Activated CD4-positive, alpha-beta T cell treated with anti-CD3 and anti-CD28 coated beads, Interleukin-2, amount 10 ng/mL, durations not matched to agents 7 days and 5 days (primary cell): ENCODE measurements at regions of chr9 and their contacts with region 1.

Region 1: DNA sequence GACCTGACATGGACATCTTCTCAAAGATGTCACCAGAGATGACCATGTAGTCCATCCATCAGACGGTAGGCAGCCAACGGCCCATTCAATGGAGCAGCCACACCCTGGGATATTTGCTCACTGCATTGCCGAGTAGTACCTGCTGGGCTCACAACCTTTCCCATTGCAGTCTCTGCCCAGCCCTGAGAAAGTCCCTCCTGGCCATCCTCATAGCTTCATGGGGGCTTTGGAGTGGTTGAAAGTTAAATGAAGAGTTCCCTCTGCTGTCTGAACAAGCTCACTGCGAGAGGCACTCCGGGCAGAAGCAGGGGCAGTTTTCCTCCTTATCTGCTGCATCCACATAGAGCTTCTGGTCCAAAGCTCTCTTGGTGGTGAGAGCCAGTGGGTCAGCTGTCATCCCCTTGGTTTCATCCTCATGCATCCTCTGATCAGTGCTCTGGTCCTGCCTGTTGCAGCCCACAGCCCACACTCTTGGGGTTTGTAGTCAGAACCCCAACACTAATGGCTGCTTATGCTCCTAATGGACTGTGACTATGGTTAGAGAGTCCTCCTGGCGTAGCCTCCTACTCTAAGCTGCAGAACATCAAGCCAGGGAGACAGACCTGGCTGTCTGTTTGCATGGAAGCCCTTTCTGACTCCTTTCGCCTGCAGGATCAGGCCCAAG is 23.4 kb downstream of the TNFSF8 start:
- DNase-seq: peak; percentile 31
- H3K4me3 Mint-ChIP-seq: peak overlapping the region; percentile 59
- H3K27ac Mint-ChIP-seq: peak overlapping the region; percentile 96
- H3K4me1 Mint-ChIP-seq: peaks cover 60% of the 10 kb centered on the region
- H3K27me3 Mint-ChIP-seq: no peaks in the 10 kb centered on the region

Region 2: DNA sequence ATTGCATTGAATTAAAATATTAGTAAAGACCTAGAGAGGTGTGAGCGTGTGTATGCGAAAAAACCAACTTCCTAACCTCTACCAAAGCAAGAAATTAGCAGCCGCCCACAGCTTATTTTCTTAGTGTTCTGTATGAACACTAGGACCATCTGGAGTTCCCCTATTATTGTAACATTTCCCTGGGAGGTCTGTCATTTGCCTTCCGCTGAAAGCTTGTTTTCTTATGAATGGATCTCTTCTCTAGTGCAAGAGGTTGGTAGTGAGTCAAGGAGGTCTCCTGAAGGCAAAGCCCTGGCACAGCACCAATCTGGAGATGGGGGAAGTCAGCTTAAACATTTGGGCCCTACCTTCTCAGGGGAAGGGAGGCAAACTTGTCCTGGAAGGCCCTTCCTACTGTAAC is 12.6 kb after region 1 on chr9:
- CTCF ChIA-PET with region 1: interaction called, 19 read pairs
- POLR2A ChIA-PET with region 1: interaction called, 9 read pairs
- DNase-seq: no peak
- H3K4me3 Mint-ChIP-seq: peak overlapping the region; percentile 28
- H3K27ac Mint-ChIP-seq: peak overlapping the region; percentile 7
- H3K4me1 Mint-ChIP-seq: peaks cover 96% of the 10 kb centered on the region
- H3K27me3 Mint-ChIP-seq: no peaks in the 10 kb centered on the region

Region 3: GRCh38 chr9:114945616-114946412 is 38.8 kb after region 1 on chr9:
- CTCF ChIA-PET with region 1: no interaction called
- POLR2A ChIA-PET with region 1: no interaction called
- DNase-seq: no peak
- H3K4me3 Mint-ChIP-seq: no peak overlapping the region
- H3K27ac Mint-ChIP-seq: no peak overlapping the region
- H3K4me1 Mint-ChIP-seq: peaks cover 10% of the 10 kb centered on the region
- H3K27me3 Mint-ChIP-seq: peaks cover 2% of the 10 kb centered on the region